ENCODE measurements at regions of chr1 and their contacts with region 1.

Region 1: GRCh38 chr1:68346188-68346808 is 103.5 kb downstream of the RPE65 start:
- DNase-seq: peak; percentile 68
- H3K4me3 ChIP-seq: no peak overlapping the region
- H3K27ac ChIP-seq: no peak overlapping the region
- H3K4me1 ChIP-seq: no peaks in the 10 kb centered on the region
- H3K27me3 ChIP-seq: no peaks in the 10 kb centered on the region
- CTCF ChIP-seq: peak; percentile 37 to 39
- POLR2A ChIP-seq: no peak

Region 2: GRCh38 chr1:67840449-67840848 is 505.8 kb before region 1 on chr1:
- CTCF ChIA-PET with region 1: no interaction called
- POLR2A ChIA-PET with region 1: no interaction called
- dilution Hi-C with region 1: no loop called
- intact Hi-C with region 1: no loop called
- DNase-seq: peak; percentile 96
- H3K4me3 ChIP-seq: no peak overlapping the region
- H3K27ac ChIP-seq: peak overlapping the region; percentile 82
- H3K4me1 ChIP-seq: peaks cover 39% of the 10 kb centered on the region
- H3K27me3 ChIP-seq: no peaks in the 10 kb centered on the region
- CTCF ChIP-seq: no peak
- POLR2A ChIP-seq: peak; percentile 57

Region 3: DNA sequence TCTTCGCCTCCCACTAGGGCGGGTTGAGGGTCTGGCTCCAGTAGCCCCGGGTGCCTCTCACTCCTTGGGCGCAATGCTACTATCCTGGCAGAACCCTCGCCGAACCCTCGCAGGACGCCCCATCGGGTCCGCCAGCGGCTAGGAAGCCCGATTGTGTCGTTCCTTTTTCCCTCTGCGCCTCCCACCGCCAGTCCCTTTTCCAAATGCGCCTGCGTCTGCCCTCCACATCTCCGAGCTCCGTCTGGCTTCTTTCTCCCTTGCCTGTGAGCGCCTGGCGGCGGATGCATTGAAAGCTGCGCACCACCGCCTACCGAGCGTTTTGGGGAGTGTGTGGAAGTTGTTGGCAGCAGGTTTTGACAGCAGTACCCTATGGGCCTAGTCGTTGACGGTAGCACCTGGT is 294.8 kb before region 1 on chr1:
- CTCF ChIA-PET with region 1: no interaction called
- POLR2A ChIA-PET with region 1: no interaction called
- dilution Hi-C with region 1: no loop called
- intact Hi-C with region 1: loop called (anchors 5 kb)
- DNase-seq: peak; percentile 77
- H3K4me3 ChIP-seq: peak overlapping the region in 2 of 3 experiments; percentile 42 to 49
- H3K27ac ChIP-seq: no peak overlapping the region
- H3K4me1 ChIP-seq: no peaks in the 10 kb centered on the region
- H3K27me3 ChIP-seq: no peaks in the 10 kb centered on the region
- CTCF ChIP-seq: peak; percentile 39 to 59
- POLR2A ChIP-seq: peak; percentile 20

Region 4: GRCh38 chr1:68173911-68174737 is 172.2 kb before region 1 on chr1:
- CTCF ChIA-PET with region 1: interaction called, 8 read pairs
- POLR2A ChIA-PET with region 1: no interaction called
- dilution Hi-C with region 1: no loop called
- intact Hi-C with region 1: loop called (anchors 1 kb)
- DNase-seq: peak; percentile 98
- H3K4me3 ChIP-seq: peak overlapping the region in 1 of 3 experiments; percentile 41
- H3K27ac ChIP-seq: peak overlapping the region; percentile 93
- H3K4me1 ChIP-seq: peaks cover 66% of the 10 kb centered on the region
- H3K27me3 ChIP-seq: no peaks in the 10 kb centered on the region
- CTCF ChIP-seq: no peak
- POLR2A ChIP-seq: peak; percentile 60

Region 5: DNA sequence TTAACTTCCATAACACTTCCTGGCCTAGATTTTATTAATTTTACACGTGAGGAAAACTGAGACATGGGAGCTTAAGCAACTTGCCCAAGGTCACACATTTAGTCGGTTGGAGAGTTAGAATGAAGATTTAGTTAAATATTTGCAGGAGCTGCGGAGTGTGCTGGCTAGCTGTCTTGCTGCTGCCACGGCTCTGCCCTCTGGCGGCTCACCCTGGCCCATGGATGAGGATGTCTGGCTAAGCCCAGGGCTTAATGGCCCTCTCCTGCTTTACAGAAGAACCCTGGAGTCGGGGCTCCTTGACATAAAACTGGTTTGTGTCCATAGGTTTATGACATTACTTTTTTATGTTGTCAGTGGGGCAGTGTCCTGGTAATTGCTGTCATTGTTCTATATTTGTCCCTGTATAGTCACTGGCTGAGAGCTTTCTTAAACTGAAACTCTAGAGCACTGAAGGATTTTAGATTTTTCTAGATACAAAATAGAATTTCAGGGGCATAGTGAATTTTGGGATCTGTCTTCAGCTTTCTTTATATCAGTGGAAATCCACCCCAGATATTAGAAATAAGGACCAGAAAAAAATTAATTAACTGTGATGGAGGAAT is 25.1 kb before region 1 on chr1:
- CTCF ChIA-PET with region 1: interaction called, 18 read pairs
- POLR2A ChIA-PET with region 1: no interaction called
- dilution Hi-C with region 1: no loop called
- intact Hi-C with region 1: loop called (anchors 1 kb)
- DNase-seq: peak; percentile 70
- H3K4me3 ChIP-seq: no peak overlapping the region
- H3K27ac ChIP-seq: no peak overlapping the region
- H3K4me1 ChIP-seq: no peaks in the 10 kb centered on the region
- H3K27me3 ChIP-seq: no peaks in the 10 kb centered on the region
- CTCF ChIP-seq: peak; percentile 72 to 88
- POLR2A ChIP-seq: no peak

Region 6: DNA sequence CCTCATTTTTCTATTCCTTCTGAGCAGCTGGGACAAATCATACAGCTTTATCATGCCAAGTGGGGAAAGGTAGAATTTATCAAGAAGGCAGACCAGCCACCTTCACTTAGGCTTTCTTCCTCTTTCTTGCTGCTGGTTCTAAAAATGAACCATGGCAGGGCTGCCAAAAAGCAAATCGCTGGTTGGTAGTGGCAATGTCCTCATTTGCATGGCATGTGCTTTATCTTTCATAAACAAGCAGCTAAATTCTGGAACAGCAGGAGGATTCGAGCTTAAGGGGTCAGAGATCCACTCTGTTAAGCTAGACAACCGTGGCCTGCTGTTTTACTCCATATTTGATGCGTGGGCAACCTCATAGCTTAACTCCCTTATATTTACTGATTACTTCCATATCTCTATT is 12.1 kb after region 1 on chr1:
- CTCF ChIA-PET with region 1: interaction called, 22 read pairs
- POLR2A ChIA-PET with region 1: no interaction called
- dilution Hi-C with region 1: no loop called
- intact Hi-C with region 1: no loop called
- DNase-seq: no peak
- H3K4me3 ChIP-seq: no peak overlapping the region
- H3K27ac ChIP-seq: no peak overlapping the region
- H3K4me1 ChIP-seq: no peaks in the 10 kb centered on the region
- H3K27me3 ChIP-seq: no peaks in the 10 kb centered on the region
- CTCF ChIP-seq: no peak
- POLR2A ChIP-seq: no peak

Region 7: GRCh38 chr1:68384321-68384813 is 38.1 kb after region 1 on chr1:
- CTCF ChIA-PET with region 1: interaction called, 17 read pairs
- POLR2A ChIA-PET with region 1: no interaction called
- dilution Hi-C with region 1: no loop called
- intact Hi-C with region 1: loop called (anchors 1 kb)
- DNase-seq: peak; percentile 98
- H3K4me3 ChIP-seq: peak overlapping the region in 1 of 3 experiments; percentile 18
- H3K27ac ChIP-seq: peak overlapping the region; percentile 97
- H3K4me1 ChIP-seq: peaks cover 30% of the 10 kb centered on the region
- H3K27me3 ChIP-seq: no peaks in the 10 kb centered on the region
- CTCF ChIP-seq: peak; percentile 32 to 35
- POLR2A ChIP-seq: no peak

Measured in endothelial cell of umbilical vein (primary cell).